BJ (cell line): ENCODE measurements at regions of chr14 and their contacts with region 1.

Region 1: DNA sequence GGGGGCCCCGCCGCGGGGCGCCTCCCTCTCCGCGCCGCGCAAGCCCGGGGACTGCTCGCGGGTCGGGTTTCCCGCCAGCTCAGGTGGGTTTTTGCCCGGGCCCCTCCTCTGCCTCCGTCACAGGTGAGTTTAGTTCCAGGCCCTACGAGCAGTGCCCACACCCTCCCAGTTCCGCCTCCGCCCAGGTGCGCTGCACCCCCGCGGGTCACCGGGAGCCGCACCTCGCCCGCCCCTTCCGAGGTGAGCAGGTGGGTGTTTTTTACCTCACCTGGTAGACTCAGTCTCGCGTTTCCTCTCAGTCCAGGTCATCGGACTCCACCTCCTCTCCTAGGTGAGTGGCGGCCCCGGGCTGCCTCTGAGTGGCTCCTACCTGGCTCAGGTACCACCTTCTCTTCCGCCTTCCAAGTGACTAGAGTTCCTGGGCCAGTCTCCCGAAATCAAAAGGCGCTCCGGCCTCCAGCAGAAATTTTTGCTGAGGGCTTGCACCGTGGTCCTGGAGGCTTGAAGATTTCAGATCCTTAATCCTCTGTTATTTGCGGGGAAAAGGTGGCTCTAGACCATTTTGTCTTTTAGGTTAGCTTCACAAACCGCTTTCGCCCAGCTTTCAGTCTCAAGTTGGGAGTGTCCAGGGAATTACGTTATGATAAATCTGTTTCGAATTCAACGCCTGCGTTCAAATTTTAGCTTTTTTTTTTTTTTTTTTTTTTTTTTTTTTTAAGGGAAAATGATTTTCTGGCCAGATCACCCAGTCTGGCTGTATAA is at the start of gene TMEM30B:
- DNase-seq: no peak
- H3K4me3 ChIP-seq: peak within 1 kb of the TSS; percentile 34
- H3K27me3 ChIP-seq: peaks cover 7% of the 10 kb centered on the region
- CTCF ChIP-seq: no peak
- polyA plus RNA-seq, gene TMEM30B: 0.06 and 0.32 TPM in 2 replicates

Region 2: DNA sequence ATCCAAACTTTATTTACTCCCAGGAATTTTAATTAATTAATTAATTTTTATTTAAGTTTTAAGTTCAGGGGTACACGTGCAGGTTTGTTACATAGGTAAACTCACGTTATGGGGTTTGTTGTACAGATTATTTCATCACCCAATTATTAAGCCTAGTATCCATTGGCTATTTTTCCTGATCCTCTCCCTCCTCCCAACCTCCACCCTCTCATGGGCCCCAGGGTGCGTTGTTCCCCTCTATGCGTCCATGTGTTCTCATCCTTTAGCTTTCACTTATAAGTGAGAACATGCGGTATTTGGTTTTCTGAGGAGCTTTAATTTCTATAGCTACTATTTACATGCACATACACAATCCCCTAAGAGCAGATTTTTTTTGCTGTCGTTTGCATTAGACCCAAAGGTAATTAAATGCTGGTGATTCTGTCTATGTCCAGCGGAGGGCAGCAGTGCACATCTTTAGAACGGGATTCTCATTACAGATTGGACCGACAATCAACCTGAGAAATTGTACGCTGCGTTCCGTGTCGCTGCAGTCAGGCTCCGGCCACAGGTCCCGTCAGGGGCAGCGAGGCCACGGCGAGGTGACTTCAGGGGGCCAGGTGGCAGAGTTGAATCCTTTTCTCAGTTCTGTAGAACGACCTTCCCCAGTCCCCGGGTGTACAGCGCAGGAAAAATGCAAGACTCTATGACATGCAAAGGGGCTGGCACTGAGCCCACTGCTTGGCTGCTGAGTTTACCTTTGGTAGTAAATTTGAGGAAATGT is 11.9 kb before region 1 on chr14:
- CTCF ChIA-PET with region 1: interaction called, 12 read pairs
- POLR2A ChIA-PET with region 1: no interaction called
- DNase-seq: no peak
- H3K4me3 ChIP-seq: peak overlapping the region; percentile 39
- H3K27me3 ChIP-seq: peaks cover under 1% of the 10 kb centered on the region; the same call in 1 of the 2 replicates
- CTCF ChIP-seq: peak; percentile 68